ENCODE measurements at regions of chr15 and their contacts with region 1.

Region 1: DNA sequence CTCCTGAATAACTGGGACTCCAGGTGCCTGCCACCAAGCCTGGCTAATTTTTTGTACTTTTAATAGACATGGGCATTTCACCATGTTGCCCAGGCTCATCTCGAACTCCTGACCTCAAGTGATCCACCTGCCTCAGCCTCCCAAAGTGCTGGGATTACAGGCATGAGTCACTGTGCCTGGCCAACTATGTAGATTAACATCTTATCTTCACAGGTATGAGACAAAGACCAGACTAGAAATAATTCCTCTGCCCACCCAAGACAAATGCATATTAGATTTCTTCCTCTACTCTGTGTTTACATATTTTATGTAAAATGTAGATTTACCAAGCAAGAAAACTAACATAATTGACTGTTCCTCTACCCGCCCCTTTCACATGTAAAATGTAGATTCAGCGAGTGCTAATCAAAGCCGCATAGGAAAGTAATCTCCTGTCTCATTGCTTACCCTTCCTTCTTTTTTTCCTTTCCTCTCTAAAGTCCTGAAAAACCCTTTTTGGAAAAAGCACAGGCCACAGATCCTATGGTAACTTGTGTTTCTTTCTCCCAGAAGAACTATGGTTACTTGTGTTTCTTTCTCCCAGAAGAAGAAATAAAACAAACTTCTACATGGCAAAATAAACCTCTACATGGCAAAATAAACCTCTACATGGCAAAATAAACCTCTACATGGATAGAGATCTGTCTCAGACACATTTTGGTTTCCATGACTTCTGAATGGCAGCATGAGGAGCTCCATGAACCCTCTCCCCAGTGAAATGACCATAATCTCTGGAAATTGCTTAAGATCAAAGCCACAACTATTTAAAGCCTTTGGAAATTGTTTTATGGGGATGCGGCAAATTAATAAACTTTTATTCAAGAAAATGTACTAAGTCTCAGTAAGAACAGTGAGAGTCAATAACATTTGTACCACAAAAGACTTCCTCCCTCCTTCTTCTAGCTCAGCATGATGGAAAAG is 9.1 kb upstream of the ABHD2 start:
- DNase-seq: no peak
- ATAC-seq: no peak
- H3K4me3 Mint-ChIP-seq: no peak overlapping the region
- H3K27ac Mint-ChIP-seq: no peak overlapping the region
- H3K4me1 Mint-ChIP-seq: peaks cover 23% of the 10 kb centered on the region
- H3K27me3 Mint-ChIP-seq: no peaks in the 10 kb centered on the region
- CTCF ChIP-seq: no peak

Region 2: GRCh38 chr15:89057504-89058133 is 21.5 kb before region 1 on chr15:
- CTCF ChIA-PET with region 1: interaction called, 10 read pairs
- POLR2A ChIA-PET with region 1: no interaction called
- DNase-seq: peak; percentile 95
- ATAC-seq: peak; percentile 94
- H3K4me3 Mint-ChIP-seq: no peak overlapping the region
- H3K27ac Mint-ChIP-seq: peak overlapping the region; percentile 45
- H3K4me1 Mint-ChIP-seq: peaks cover 11% of the 10 kb centered on the region
- H3K27me3 Mint-ChIP-seq: no peaks in the 10 kb centered on the region
- CTCF ChIP-seq: peak; percentile 100

Measured in WTC11 (cell line).